A549 (cell line): ENCODE measurements at regions of chr2 and their contacts with region 1.

Region 1: GRCh38 chr2:69306822-69307578 is 80.0 kb downstream of the GFPT1 start:
- DNase-seq: peak; percentile 88 to 90
- ATAC-seq: peak; percentile 81 to 92
- H3K4me3 ChIP-seq: peak overlapping the region; percentile 86
- H3K27ac ChIP-seq: peak overlapping the region; percentile 94 to 99
- H3K4me1 ChIP-seq: peaks cover 37% of the 10 kb centered on the region
- CTCF ChIP-seq: peak; percentile 92
- EP300 ChIP-seq: no peak
- POLR2A ChIP-seq: peak; percentile 19; the same call in 1 of the 2 replicates
- RAD21 ChIP-seq: peak; percentile 97 to 99

Region 2: DNA sequence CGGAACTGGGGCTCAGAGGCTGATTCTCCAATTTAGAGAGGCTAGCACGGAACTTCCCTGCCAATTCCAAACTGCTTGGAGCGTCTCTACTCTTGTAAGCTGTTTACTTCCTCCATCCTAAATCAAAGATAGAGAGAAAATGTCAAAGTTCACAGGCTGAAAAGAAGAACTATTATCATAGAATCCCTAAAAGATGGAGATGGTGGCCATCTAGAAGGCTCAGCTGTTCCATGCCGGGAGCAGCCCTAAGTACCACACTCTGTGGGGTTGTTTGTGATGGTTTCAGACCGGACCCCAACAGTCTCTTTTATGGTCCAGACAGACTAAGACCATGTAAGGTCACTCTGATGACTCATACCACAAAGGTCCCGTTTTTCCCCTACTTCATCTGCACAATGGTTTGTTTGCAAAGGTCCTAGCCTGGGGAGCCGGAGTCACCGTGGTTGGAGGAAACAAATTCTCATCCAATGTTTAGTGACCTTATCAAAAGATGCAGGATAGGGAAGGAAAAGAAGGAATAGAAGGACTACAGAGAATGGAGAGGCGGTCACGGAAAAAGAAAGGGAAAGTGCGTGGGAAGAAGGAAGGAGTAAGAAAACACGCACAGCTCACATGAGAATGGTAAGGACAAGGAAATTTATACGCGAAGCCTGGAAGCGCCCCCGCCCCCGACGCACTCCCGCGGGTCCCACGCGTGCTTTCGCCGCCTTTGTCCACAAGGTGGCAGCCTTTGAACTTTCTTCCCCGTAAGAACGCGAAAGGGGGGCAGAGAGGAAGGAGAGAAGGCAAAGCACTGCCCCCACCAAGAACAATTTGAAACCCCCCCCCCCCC is 294.5 kb before region 1 on chr2:
- CTCF ChIA-PET with region 1: interaction called, 44 read pairs
- POLR2A ChIA-PET with region 1: interaction called, 12 read pairs
- DNase-seq: peak; percentile 74 to 85
- ATAC-seq: peak; percentile 55 to 65
- H3K4me3 ChIP-seq: peak overlapping the region; percentile 85
- H3K27ac ChIP-seq: peak overlapping the region; percentile 90 to 95
- H3K4me1 ChIP-seq: peaks cover 35% of the 10 kb centered on the region
- CTCF ChIP-seq: peak; percentile 89
- EP300 ChIP-seq: peak in 1 of 2 experiments; percentile 31; a peak in 1 of 5 replicates
- POLR2A ChIP-seq: no peak
- RAD21 ChIP-seq: peak; percentile 80 to 96

Region 3: GRCh38 chr2:69122271-69122670 is 184.7 kb before region 1 on chr2:
- CTCF ChIA-PET with region 1: interaction called, 21 read pairs
- POLR2A ChIA-PET with region 1: no interaction called
- DNase-seq: no peak
- ATAC-seq: no peak
- H3K4me3 ChIP-seq: no peak overlapping the region
- H3K27ac ChIP-seq: no peak overlapping the region
- H3K4me1 ChIP-seq: no peaks in the 10 kb centered on the region
- CTCF ChIP-seq: no peak
- EP300 ChIP-seq: no peak
- POLR2A ChIP-seq: no peak
- RAD21 ChIP-seq: no peak

Region 4: GRCh38 chr2:69188182-69188900 is 118.7 kb before region 1 on chr2:
- CTCF ChIA-PET with region 1: interaction called, 13 read pairs
- POLR2A ChIA-PET with region 1: no interaction called
- DNase-seq: no peak
- ATAC-seq: no peak
- H3K4me3 ChIP-seq: no peak overlapping the region
- H3K27ac ChIP-seq: no peak overlapping the region
- H3K4me1 ChIP-seq: no peaks in the 10 kb centered on the region
- CTCF ChIP-seq: no peak
- EP300 ChIP-seq: no peak
- POLR2A ChIP-seq: no peak
- RAD21 ChIP-seq: no peak

Region 5: DNA sequence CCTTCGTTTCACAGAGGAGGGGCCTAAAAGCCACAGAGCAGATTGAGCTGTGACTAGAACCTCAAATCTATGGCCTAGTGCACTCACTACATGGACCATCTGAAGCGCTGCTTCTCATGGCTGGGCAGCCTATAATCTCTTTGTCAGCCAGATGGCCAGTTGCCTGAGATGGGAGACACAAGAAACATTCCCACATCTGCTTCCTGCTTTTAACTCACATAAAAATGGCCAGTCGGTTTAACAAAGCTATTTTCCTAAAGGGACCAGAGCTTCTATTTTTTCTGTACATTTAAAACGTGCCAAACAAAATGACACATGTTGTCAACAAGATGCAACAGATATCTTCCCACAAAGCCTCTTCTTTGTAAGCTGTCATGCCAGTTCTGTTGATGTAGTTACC is 93.8 kb before region 1 on chr2:
- CTCF ChIA-PET with region 1: interaction called, 15 read pairs
- POLR2A ChIA-PET with region 1: no interaction called
- DNase-seq: no peak
- ATAC-seq: no peak
- H3K4me3 ChIP-seq: no peak overlapping the region
- H3K27ac ChIP-seq: no peak overlapping the region
- H3K4me1 ChIP-seq: peaks cover 20% of the 10 kb centered on the region; the same call in 2 of the 3 replicates
- CTCF ChIP-seq: no peak
- EP300 ChIP-seq: no peak
- POLR2A ChIP-seq: no peak
- RAD21 ChIP-seq: no peak

Region 6: GRCh38 chr2:69253611-69254288 is 53.2 kb before region 1 on chr2:
- CTCF ChIA-PET with region 1: interaction called, 15 read pairs
- POLR2A ChIA-PET with region 1: interaction called, 4 read pairs
- DNase-seq: peak; percentile 83 to 99
- ATAC-seq: peak; percentile 97 to 100
- H3K4me3 ChIP-seq: no peak overlapping the region
- H3K27ac ChIP-seq: peak overlapping the region; percentile 85 to 91
- H3K4me1 ChIP-seq: peaks cover 67% of the 10 kb centered on the region
- CTCF ChIP-seq: no peak
- EP300 ChIP-seq: peak; percentile 100
- POLR2A ChIP-seq: no peak
- RAD21 ChIP-seq: peak; percentile 26 to 71; a peak in 4 of 5 replicates

Region 7: DNA sequence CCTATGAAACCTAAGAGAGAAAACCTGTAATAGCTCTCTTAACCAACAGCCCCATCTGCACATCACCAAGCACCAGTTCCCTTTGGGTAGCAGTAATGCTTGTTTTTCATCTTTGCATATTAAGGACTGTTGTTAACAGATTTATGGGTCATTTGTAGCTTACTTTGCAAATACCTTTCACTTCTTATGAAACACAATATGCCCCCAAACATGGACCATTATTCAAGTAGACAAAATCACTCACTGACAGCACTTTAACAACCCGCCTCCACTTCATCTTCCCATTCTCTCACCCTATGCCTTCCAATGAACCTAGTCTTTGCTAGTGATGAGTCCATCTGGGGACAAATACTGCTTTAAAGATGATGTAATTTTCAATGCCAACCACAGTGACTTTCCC is 15.6 kb after region 1 on chr2:
- CTCF ChIA-PET with region 1: interaction called, 44 read pairs
- POLR2A ChIA-PET with region 1: no interaction called
- DNase-seq: no peak
- ATAC-seq: no peak
- H3K4me3 ChIP-seq: no peak overlapping the region
- H3K27ac ChIP-seq: no peak overlapping the region
- H3K4me1 ChIP-seq: peaks cover 6% of the 10 kb centered on the region; the same call in 1 of the 3 replicates
- CTCF ChIP-seq: no peak
- EP300 ChIP-seq: no peak
- POLR2A ChIP-seq: no peak
- RAD21 ChIP-seq: no peak

Region 8: GRCh38 chr2:69405306-69405705 is 98.3 kb after region 1 on chr2:
- CTCF ChIA-PET with region 1: no interaction called
- POLR2A ChIA-PET with region 1: no interaction called
- DNase-seq: no peak
- ATAC-seq: no peak
- H3K4me3 ChIP-seq: no peak overlapping the region
- H3K27ac ChIP-seq: no peak overlapping the region
- H3K4me1 ChIP-seq: no peaks in the 10 kb centered on the region
- CTCF ChIP-seq: no peak
- EP300 ChIP-seq: no peak
- POLR2A ChIP-seq: no peak
- RAD21 ChIP-seq: no peak